GM12878 (cell line): ENCODE measurements at regions of chr11 and their contacts with region 1.

Region 1: DNA sequence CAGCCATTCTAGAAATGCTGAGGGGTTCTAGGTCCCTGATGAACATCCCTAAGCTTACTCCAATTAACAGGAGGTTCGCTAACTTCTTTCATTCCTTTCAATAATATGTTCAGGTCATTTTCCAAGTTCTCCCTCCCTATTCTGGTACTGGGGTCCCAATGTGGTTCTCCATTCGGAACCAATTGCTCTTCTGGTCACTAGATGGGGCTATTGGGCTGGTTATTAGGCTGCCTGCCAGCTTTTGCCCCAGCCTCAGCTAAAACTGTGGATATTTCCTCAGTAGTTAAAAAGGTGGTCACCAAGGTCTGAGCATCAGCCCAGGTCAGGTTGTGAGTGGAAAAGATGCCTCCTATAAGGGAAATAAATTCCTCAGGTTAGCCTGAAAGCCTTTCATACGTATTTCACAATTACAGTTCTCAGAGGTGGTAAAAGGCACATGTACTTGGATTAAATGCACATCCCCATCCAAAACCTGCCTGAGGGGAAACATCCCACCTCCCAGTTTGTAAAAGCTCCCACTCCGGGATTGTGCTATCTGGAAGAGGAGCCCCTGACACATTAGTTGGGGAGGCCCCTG is 161.1 kb upstream of the CCDC179 start:
- DNase-seq: no peak
- ATAC-seq: peak; percentile 77
- H3K4me3 ChIP-seq: no peak overlapping the region
- H3K27ac ChIP-seq: no peak overlapping the region
- H3K4me1 ChIP-seq: no peaks in the 10 kb centered on the region
- H3K27me3 ChIP-seq: no peaks in the 10 kb centered on the region
- CTCF ChIP-seq: peak; percentile 65 to 81 (median 68)
- EP300 ChIP-seq: no peak
- POLR2A ChIP-seq: no peak
- RAD21 ChIP-seq: peak; percentile 69

Region 2: GRCh38 chr11:22703040-22703439 is 318.3 kb before region 1 on chr11:
- CTCF ChIA-PET with region 1: no interaction called
- POLR2A ChIA-PET with region 1: no interaction called
- RAD21 ChIA-PET with region 1: no interaction called
- SMC1A ChIA-PET with region 1: no interaction called
- in situ Hi-C with region 1: no loop called
- intact Hi-C with region 1: no loop called
- DNase-seq: peak; percentile 21
- ATAC-seq: peak; percentile 76
- H3K4me3 ChIP-seq: no peak overlapping the region
- H3K27ac ChIP-seq: no peak overlapping the region
- H3K4me1 ChIP-seq: no peaks in the 10 kb centered on the region
- H3K27me3 ChIP-seq: no peaks in the 10 kb centered on the region
- CTCF ChIP-seq: no peak
- EP300 ChIP-seq: peak in 1 of 2 experiments; percentile 43; a peak in 1 of 4 replicates
- POLR2A ChIP-seq: no peak
- RAD21 ChIP-seq: no peak

Region 3: DNA sequence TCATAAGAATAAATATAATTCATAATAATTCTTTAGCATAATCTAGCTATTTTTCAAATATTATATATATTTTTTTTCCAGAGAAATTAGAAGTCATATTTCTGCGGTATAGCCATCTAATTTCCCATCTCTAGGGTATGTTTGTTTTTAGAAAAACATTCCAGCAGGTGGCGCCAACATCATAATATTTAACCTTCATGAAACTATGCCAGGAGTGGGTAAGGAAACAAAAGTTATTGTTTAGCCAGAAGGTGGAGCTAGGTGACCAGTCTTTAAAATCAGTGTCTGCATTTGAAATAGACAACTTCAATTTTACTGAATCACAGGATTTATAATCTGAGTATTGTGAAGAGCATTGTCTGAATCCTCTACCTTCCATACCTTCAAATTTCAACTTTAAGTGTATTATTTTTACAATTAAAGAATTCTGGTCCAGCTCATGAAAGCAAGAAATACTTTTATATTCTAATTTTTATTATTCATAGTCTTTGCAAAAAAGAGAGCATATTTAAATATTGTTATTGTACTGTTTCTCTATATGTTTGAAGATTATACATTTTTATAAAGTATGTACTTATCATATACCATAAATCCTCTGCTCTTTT is 145.4 kb before region 1 on chr11:
- CTCF ChIA-PET with region 1: interaction called, 45 read pairs
- POLR2A ChIA-PET with region 1: no interaction called
- RAD21 ChIA-PET with region 1: interaction called, 13 read pairs
- SMC1A ChIA-PET with region 1: interaction called, 30 read pairs
- in situ Hi-C with region 1: no loop called
- intact Hi-C with region 1: loop called (anchors 5 kb)
- DNase-seq: peak; percentile 38
- ATAC-seq: peak; percentile 100
- H3K4me3 ChIP-seq: no peak overlapping the region
- H3K27ac ChIP-seq: no peak overlapping the region
- H3K4me1 ChIP-seq: no peaks in the 10 kb centered on the region
- H3K27me3 ChIP-seq: no peaks in the 10 kb centered on the region
- CTCF ChIP-seq: peak; percentile 54 to 89 (median 68)
- EP300 ChIP-seq: no peak
- POLR2A ChIP-seq: no peak
- RAD21 ChIP-seq: peak; percentile 83

Region 4: GRCh38 chr11:23058656-23059055 is 37.3 kb after region 1 on chr11:
- CTCF ChIA-PET with region 1: interaction called, 21 read pairs
- POLR2A ChIA-PET with region 1: no interaction called
- RAD21 ChIA-PET with region 1: interaction called, 6 read pairs
- SMC1A ChIA-PET with region 1: interaction called, 7 read pairs
- in situ Hi-C with region 1: no loop called
- intact Hi-C with region 1: no loop called
- DNase-seq: no peak
- ATAC-seq: no peak
- H3K4me3 ChIP-seq: no peak overlapping the region
- H3K27ac ChIP-seq: no peak overlapping the region
- H3K4me1 ChIP-seq: no peaks in the 10 kb centered on the region
- H3K27me3 ChIP-seq: no peaks in the 10 kb centered on the region
- CTCF ChIP-seq: no peak
- EP300 ChIP-seq: no peak
- POLR2A ChIP-seq: no peak
- RAD21 ChIP-seq: no peak

Region 5: DNA sequence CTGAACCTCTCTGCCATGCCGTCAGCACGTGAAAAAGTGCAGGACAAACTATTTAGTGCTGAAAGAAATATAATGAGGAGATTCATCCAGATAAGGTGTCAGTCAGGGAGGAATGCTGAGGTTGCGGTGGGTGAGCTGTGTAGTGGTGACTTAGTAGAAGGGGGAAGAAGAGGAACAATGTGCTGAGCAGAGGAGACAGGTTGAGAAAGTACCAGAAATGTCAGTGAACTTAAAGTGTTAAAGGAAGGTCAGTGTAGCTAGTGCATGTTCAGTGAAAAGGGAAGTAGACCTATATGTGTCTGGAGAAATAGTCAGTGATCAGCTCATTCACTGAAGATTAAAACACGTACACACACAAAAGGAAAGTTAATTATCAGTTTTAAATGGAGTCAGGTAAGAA is 76.5 kb after region 1 on chr11:
- CTCF ChIA-PET with region 1: interaction called, 16 read pairs
- POLR2A ChIA-PET with region 1: interaction called, 4 read pairs
- RAD21 ChIA-PET with region 1: interaction called, 15 read pairs
- SMC1A ChIA-PET with region 1: interaction called, 19 read pairs
- in situ Hi-C with region 1: no loop called
- intact Hi-C with region 1: no loop called
- DNase-seq: no peak
- ATAC-seq: peak; percentile 92
- H3K4me3 ChIP-seq: no peak overlapping the region
- H3K27ac ChIP-seq: no peak overlapping the region
- H3K4me1 ChIP-seq: no peaks in the 10 kb centered on the region
- H3K27me3 ChIP-seq: no peaks in the 10 kb centered on the region
- CTCF ChIP-seq: no peak
- EP300 ChIP-seq: no peak
- POLR2A ChIP-seq: no peak
- RAD21 ChIP-seq: no peak

Region 6: DNA sequence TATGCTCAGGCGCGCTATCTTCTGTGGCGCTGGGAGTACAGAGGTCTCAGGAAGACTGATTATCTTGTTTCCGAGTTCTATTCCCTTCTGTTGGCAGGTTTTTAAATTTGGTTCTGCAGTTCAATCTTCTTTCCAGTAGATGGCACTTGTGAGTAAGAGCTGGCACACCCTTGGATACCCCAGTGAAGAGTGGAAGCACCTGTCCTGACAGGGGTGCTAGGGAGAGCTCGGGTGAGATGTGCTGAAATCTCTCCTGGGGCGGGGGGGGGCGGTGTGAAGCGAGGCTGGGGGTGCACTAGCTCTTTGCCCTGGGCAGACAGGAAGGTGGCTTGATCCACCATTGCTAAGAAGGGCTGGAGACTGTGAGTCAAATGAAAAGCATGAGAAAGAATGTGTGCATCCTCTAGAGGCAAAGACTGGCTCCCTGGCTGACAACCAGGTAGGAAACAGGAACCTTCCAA is 518.8 kb after region 1 on chr11:
- CTCF ChIA-PET with region 1: interaction called, 33 read pairs
- POLR2A ChIA-PET with region 1: no interaction called
- RAD21 ChIA-PET with region 1: interaction called, 20 read pairs
- SMC1A ChIA-PET with region 1: interaction called, 27 read pairs
- in situ Hi-C with region 1: no loop called
- intact Hi-C with region 1: loop called (anchors 1 kb)
- DNase-seq: peak; percentile 5
- ATAC-seq: peak; percentile 96
- H3K4me3 ChIP-seq: no peak overlapping the region
- H3K27ac ChIP-seq: no peak overlapping the region
- H3K4me1 ChIP-seq: no peaks in the 10 kb centered on the region
- H3K27me3 ChIP-seq: no peaks in the 10 kb centered on the region
- CTCF ChIP-seq: peak; percentile 68 to 77 (median 72)
- EP300 ChIP-seq: no peak
- POLR2A ChIP-seq: no peak
- RAD21 ChIP-seq: peak; percentile 70